Heart left ventricle (tissue), 16 donors: ENCODE measurements at regions of chr6 and their contacts with region 1.

Region 1: DNA sequence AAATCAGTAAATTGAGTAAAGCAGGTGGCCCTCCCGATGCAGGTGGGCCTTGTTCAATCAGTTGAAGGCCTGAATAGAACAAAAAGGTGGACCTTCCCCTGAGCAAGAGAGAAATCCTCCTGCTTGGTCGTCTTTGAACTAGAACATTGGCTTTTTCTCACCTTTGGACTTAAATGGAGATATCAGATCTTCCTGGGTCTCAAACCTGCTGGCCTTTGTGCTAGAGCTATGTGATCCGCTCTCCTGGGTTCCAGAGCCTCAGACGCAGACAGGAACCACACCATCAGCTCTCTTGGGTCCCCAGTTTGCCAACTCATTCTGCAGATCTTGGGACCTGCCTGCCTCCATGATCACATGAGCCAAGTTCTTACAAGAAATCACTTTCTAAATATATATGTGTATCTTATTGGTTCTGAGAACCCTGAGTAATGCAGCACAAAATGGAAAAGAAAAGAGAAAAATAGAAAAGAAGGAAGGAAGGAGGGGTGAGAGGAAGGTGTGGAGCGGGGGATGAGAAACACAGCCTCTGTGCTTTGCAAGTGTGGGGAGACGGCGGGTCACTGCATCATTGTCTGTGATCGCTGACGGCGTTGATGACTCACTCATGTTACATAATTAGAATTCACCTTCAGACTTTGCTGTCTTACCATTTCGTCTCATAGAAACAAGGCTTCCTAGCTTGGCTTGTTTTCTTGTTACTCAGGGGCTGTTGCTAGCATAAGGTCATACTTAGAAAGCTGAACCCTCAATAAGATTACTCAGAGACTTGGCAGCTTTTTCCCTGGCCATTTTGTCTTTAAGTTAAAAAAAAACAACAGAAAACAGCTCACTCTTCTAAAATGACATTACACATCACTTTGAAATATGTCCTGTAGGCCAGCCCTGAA is 85.7 kb upstream of the NEDD9 start:
- DNase-seq: peak in 4 of 5 donors; percentile 44 to 79 (median 62)
- ATAC-seq: peak; percentile 40 to 88 (median 76)
- H3K4me3 ChIP-seq: no peak overlapping the region
- H3K27ac ChIP-seq: peak overlapping the region in 11 of 12 donors; percentile 10 to 69 (median 61)
- H3K4me1 ChIP-seq: peaks cover 0 to 42% (median 16%) of the 10 kb centered on the region in 12 donors
- H3K27me3 ChIP-seq: no peaks in the 10 kb centered on the region
- CTCF ChIP-seq: no peak
- POLR2A ChIP-seq: no peak

Region 2: DNA sequence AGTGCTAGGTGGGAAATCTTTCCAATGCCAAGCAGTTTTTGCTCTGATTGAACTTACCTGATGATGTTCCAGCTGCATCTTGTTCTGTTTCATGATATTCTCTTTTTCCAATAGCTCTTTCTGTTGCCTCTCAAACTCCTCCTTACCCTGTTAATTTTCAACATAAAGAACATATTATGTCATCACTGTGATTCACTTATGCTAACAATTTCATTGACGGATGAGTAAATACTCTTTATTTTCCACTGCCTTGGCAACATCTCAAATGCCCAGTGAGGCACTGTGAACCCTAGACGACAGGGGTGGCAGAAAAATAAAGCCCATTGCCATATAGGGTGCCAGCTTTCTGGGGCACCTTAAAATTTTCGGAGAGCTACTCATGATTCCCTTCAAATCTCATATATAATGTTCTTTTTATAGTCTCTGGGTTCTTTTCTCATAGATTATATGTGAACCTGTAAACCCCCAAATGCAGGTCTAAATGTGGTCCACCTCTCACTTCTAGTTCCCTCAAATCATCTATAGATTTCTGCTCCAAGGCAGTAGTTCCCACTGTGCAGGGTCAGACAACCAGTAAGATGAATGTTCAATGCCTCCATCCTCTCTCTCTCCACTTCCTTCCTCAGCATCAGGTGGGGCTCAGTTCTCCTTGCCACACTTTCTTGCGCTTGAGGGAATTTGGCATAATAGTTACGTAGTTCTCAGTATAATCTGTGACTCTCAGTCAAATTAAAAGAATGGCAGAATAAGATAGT is 129.8 kb before region 1 on chr6:
- intact Hi-C with region 1: loop called in 1 of 10 experiments (anchors 10 kb)
- DNase-seq: no peak
- ATAC-seq: no peak
- H3K4me3 ChIP-seq: no peak overlapping the region
- H3K27ac ChIP-seq: no peak overlapping the region
- H3K4me1 ChIP-seq: peaks cover 0 to 8% (median 0%) of the 10 kb centered on the region in 12 donors
- H3K27me3 ChIP-seq: no peaks in the 10 kb centered on the region
- CTCF ChIP-seq: no peak
- POLR2A ChIP-seq: no peak

Region 3: DNA sequence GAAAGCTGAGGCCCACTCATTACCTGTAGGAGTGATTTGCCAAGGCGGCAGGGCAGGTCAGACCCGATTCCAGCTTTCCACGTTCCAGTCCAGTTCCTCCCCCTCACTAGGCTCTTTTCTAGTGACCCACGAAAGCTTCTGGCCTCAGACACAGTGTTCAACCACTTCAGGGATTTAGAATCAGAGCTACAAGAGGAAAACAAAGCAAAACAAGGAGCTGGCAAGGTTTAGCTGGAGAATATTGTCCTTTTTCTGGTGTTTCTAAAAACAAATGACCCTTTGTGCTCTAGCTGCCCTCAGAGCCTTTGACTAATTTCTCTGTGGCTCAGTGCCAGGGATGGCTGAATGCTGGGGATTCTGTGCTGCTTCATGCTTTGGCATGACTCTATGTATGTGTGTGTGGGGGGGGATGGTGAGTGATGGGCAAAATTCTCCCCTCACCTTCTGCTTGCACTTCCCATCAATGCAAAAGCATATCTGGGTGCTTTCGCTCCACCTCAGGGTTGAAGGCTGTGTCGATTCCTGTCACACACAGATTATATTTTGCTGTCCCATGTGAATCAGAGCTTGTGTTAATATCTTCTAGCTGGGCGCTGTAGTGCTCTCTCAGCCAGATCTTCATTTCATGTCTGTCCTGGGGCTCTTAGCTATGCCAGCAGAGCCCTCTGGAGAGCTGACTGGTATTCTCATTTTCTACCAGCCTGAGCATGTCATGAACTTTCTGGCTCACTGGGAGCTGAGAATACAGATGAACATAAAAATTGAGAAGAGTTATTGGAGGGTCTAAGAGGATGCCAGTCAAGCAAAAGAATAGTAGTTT is 66.4 kb before region 1 on chr6:
- intact Hi-C with region 1: loop called in 1 of 10 experiments (anchors 10 kb)
- DNase-seq: peak in 4 of 5 donors; percentile 55 to 74 (median 67)
- ATAC-seq: peak; percentile 59 to 88 (median 86)
- H3K4me3 ChIP-seq: peak overlapping the region in 2 of 12 donors; percentile 9 to 10
- H3K27ac ChIP-seq: peak overlapping the region; percentile 50 to 72 (median 62)
- H3K4me1 ChIP-seq: peaks cover 4 to 23% (median 18%) of the 10 kb centered on the region in 12 donors
- H3K27me3 ChIP-seq: no peaks in the 10 kb centered on the region
- CTCF ChIP-seq: no peak
- POLR2A ChIP-seq: no peak

Region 4: GRCh38 chr6:11356404-11357155 is 38.5 kb after region 1 on chr6:
- intact Hi-C with region 1: loop called in 1 of 10 experiments (anchors 5 kb)
- DNase-seq: peak in 4 of 5 donors; percentile 49 to 70 (median 57)
- ATAC-seq: peak; percentile 75 to 90 (median 79)
- H3K4me3 ChIP-seq: no peak overlapping the region
- H3K27ac ChIP-seq: peak overlapping the region; percentile 63 to 97 (median 90)
- H3K4me1 ChIP-seq: peaks cover 0 to 63% (median 26%) of the 10 kb centered on the region in 12 donors
- H3K27me3 ChIP-seq: no peaks in the 10 kb centered on the region
- CTCF ChIP-seq: no peak
- POLR2A ChIP-seq: no peak